Activated B cell treated with CpG ODN at 0.5 μM for 24 hours (primary cell): ENCODE measurements at regions of chr3 and their contacts with region 1.

Region 1: GRCh38 chr3:58349792-58350626 is 17.3 kb downstream of the PXK start:
- DNase-seq: no peak
- ATAC-seq: peak; percentile 83
- H3K4me3 Mint-ChIP-seq: peak overlapping the region; percentile 71
- H3K27ac Mint-ChIP-seq: peak overlapping the region; percentile 100
- H3K4me1 Mint-ChIP-seq: peaks cover 96% of the 10 kb centered on the region
- H3K27me3 Mint-ChIP-seq: no peaks in the 10 kb centered on the region
- CTCF ChIP-seq: no peak

Region 2: DNA sequence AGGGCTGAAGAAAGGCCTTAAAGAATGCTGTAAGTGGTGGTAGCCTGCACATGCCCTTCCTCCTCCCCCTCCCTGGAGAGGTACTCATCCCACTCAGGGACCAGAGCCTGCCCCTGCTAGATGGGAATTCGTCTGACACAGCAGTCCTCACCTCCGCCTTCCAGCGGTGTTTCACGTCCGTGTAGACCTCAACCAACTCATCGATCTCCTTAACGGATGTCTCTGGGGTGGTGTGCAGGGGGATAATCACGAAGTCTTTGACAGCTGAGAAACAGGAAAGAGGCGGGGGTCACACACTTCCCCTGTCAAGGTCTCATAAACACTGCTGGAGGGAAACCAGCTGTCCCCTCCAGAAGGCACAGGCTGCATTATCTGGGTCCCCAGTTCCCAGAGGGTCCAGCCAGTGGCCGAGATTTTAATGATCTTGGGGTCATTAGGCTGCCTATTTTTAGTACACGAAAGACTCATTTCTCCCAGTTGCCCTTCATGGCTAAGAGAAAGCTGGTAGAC is 149.1 kb before region 1 on chr3:
- CTCF ChIA-PET with region 1: no interaction called
- POLR2A ChIA-PET with region 1: interaction called, 14 read pairs
- intact Hi-C with region 1: loop called (anchors 5 kb)
- DNase-seq: no peak
- ATAC-seq: no peak
- H3K4me3 Mint-ChIP-seq: peak overlapping the region; percentile 64
- H3K27ac Mint-ChIP-seq: peak overlapping the region; percentile 70
- H3K4me1 Mint-ChIP-seq: peaks cover 66% of the 10 kb centered on the region
- H3K27me3 Mint-ChIP-seq: no peaks in the 10 kb centered on the region
- CTCF ChIP-seq: no peak

Region 3: GRCh38 chr3:58231666-58232065 is 118.3 kb before region 1 on chr3:
- CTCF ChIA-PET with region 1: no interaction called
- POLR2A ChIA-PET with region 1: interaction called, 4 read pairs
- intact Hi-C with region 1: loop called (anchors 2 kb)
- DNase-seq: no peak
- ATAC-seq: no peak
- H3K4me3 Mint-ChIP-seq: no peak overlapping the region
- H3K27ac Mint-ChIP-seq: peak overlapping the region; percentile 90
- H3K4me1 Mint-ChIP-seq: peaks cover 63% of the 10 kb centered on the region
- H3K27me3 Mint-ChIP-seq: no peaks in the 10 kb centered on the region
- CTCF ChIP-seq: no peak

Region 4: DNA sequence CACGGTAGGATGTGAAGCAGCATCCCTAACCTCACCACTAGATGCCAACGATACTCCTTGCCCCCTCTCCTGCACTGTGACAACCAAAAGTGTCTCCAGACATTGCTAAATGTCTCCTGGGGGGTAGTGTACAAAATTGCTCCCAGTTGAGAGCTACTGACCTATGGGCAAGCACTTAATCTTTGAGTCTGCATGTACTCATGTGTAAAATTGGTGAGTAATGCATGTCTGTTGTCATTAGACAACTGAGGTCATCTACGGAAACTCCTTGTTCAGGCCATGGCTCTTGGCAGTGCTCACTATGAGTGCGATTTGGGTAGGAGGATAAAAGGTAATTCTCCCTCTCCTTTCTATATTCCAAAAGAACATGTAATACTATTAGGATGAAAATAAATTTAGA is 54.4 kb after region 1 on chr3:
- CTCF ChIA-PET with region 1: interaction called, 4 read pairs
- POLR2A ChIA-PET with region 1: interaction called, 13 read pairs
- intact Hi-C with region 1: no loop called
- DNase-seq: no peak
- ATAC-seq: peak; percentile 48
- H3K4me3 Mint-ChIP-seq: no peak overlapping the region
- H3K27ac Mint-ChIP-seq: peak overlapping the region; percentile 68
- H3K4me1 Mint-ChIP-seq: peaks cover 59% of the 10 kb centered on the region
- H3K27me3 Mint-ChIP-seq: no peaks in the 10 kb centered on the region
- CTCF ChIP-seq: no peak

Region 5: GRCh38 chr3:58414538-58415197 is 64.7 kb after region 1 on chr3:
- CTCF ChIA-PET with region 1: interaction called, 20 read pairs
- POLR2A ChIA-PET with region 1: interaction called, 6 read pairs
- intact Hi-C with region 1: loop called (anchors 2 kb)
- DNase-seq: no peak
- ATAC-seq: peak; percentile 81
- H3K4me3 Mint-ChIP-seq: no peak overlapping the region
- H3K27ac Mint-ChIP-seq: no peak overlapping the region
- H3K4me1 Mint-ChIP-seq: peaks cover 48% of the 10 kb centered on the region
- H3K27me3 Mint-ChIP-seq: no peaks in the 10 kb centered on the region
- CTCF ChIP-seq: peak; percentile 55